Left cardiac atrium (tissue), 4 donors: ENCODE measurements at regions of chr2 and their contacts with region 1.

Region 1: DNA sequence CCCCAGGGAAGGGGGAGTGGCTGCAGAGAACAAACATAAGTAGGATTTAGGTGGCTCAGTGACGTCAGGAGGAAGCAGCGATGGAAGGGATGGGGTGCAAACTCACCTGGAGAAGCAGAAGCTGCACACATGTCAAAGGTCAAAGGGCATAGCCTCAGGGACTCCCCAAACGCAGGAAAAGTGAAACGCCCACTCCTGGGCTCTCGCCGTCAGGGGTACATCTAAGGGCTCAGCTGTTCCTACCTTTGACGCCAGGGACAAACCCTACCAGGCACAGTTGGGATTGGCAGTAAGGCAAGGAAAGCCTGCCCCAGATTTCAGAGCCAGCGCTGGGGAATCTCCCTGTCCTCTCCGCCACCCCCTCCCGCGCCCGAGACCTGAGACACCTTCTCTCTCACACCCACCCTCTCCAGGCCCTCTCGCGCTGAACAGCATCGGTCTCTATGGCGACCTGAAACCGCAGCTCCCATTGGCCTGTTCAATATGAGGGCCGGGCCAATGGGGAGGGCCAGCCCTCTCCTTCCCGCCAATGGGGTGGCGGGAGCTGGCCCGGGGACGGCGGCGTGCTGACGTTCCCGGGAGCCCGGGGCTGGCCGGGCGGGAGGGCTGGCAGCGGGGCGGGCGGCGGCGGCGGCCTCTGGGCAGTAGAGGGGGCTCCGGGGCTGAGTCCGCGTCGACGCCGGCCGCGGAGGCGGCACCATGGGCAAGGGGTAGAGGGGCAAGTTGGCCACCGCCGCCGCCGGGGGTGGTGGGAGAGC is at the starts of genes CCDC148 and PKP4:
- DNase-seq: peak; percentile 92
- ATAC-seq: peak; percentile 95 to 96
- total RNA-seq, gene CCDC148: 1.1 to 2.0 TPM
- total RNA-seq, gene PKP4: 62.5 to 64.8 TPM

Region 2: DNA sequence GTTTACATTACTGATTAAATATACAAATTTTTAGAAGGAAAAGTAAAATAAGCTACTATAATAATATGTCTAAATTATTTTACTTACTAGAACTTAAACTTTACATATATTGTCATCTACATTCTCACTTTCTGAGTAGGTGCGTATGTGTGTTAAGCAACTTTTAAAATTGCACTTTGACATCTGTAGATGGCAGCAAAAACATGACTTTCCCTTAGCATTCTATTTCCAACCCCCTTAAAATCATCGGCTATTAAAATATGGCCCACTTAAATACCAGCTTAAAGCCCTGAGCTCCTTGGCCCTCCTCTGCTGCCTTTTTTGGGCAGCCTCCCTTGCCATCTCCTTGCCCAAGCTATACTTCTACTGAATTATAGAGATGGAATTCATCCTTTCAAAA is 276.8 kb before region 1 on chr2:
- intact Hi-C with region 1: loop called in 1 of 2 experiments (anchors 10 kb)
- DNase-seq: no peak
- ATAC-seq: peak in 1 of 2 donors; percentile 48

Region 3: DNA sequence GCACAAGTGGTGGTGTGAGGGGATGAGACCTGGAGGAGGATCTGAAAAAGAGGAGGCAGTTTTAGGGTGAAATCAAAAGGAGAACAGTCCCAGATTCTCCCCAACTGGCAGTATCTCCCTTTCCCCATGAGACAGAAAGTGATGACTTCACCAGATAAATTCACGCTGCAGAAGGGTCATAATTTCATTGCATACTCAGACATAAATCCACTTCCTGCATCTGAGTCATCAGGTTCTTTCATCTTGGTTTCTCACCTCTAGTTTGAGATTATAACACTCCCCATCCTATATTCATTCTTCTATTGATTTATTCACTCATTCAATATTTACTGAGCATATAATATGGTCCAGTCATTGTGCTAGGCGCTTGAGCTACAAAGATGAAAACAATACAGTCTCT is 64.6 kb before region 1 on chr2:
- intact Hi-C with region 1: no loop called
- DNase-seq: no peak
- ATAC-seq: no peak

Region 4: GRCh38 chr2:158745044-158745865 is 288.8 kb after region 1 on chr2:
- intact Hi-C with region 1: loop called (anchors 5 to 10 kb)
- DNase-seq: peak; percentile 56
- ATAC-seq: peak; percentile 54 to 57